OCI-LY7 (cell line): ENCODE measurements at regions of chr9 and their contacts with region 1.

Region 1: GRCh38 chr9:26892251-26893029 is at the start of gene CAAP1:
- DNase-seq: peak; percentile 96
- H3K4me3 ChIP-seq: peak within 1 kb of the TSS; percentile 89
- H3K27ac ChIP-seq: peak within 1 kb of the TSS; percentile 93
- H3K4me1 ChIP-seq: peaks cover 32% of the 10 kb centered on the region
- CTCF ChIP-seq: peak; percentile 57
- total RNA-seq, gene CAAP1: 38.8 and 52.3 TPM in 2 replicates

Region 2: DNA sequence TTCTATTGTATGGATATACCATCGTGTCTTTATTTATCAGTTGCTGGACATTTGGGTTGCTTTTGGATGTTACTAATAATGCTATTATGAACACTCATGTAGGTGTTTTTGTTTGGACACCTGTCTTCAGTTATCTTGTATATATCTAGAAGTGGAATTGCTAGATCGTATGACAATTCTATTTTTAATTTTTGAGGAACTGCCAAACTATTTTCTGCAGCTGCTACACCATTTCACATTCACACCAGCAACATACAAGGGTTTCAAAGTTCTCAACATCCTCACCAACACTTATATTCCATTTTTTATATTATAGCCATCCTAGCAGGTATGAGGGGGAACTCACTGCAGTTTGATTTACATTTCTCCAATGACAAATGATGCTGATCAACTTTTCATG is 324.5 kb before region 1 on chr9:
- CTCF ChIA-PET with region 1: no interaction called
- POLR2A ChIA-PET with region 1: no interaction called
- intact Hi-C with region 1: no loop called
- DNase-seq: no peak
- H3K4me3 ChIP-seq: no peak overlapping the region
- H3K27ac ChIP-seq: no peak overlapping the region
- H3K4me1 ChIP-seq: no peaks in the 10 kb centered on the region
- CTCF ChIP-seq: no peak

Region 3: DNA sequence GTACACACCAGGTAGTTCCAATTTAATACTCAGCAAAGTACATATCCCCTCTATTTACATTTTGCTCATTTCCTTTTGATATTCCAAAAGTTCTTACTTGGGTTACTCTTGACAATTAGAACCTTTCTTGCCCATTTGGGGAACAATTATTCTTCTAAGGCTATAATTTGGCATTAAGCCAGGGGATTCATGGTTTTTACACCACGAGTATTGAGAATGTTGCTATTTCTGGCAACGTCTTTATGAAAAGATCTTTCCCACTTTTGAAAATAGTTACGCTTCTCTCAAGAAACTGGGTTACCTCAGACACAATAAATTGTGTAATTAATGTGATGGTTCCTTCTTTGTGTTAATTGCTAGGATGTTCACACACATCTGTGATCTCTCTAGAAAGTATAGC is 11.6 kb after region 1 on chr9:
- CTCF ChIA-PET with region 1: no interaction called
- POLR2A ChIA-PET with region 1: interaction called, 10 read pairs
- intact Hi-C with region 1: no loop called
- DNase-seq: no peak
- H3K4me3 ChIP-seq: no peak overlapping the region
- H3K27ac ChIP-seq: no peak overlapping the region
- H3K4me1 ChIP-seq: no peaks in the 10 kb centered on the region
- CTCF ChIP-seq: no peak